Transverse colon (tissue), 4 donors: ENCODE measurements at regions of chr14 and their contacts with region 1.

Region 1: GRCh38 chr14:69797573-69798338 is 715 bp upstream of the SLC10A1 start:
- DNase-seq: peak; percentile 66
- H3K4me3 ChIP-seq: no peak overlapping the region
- H3K27ac ChIP-seq: peak overlapping the region; percentile 44 to 68 (median 53)
- H3K4me1 ChIP-seq: peaks cover 0 to 9% (median 2%) of the 10 kb centered on the region in 4 donors
- H3K27me3 ChIP-seq: peaks cover 7% of the 10 kb centered on the region
- CTCF ChIP-seq: no peak
- EP300 ChIP-seq: no peak
- POLR2A ChIP-seq: no peak

Region 2: GRCh38 chr14:69827560-69827959 is 29.8 kb after region 1 on chr14:
- in situ Hi-C with region 1: no loop called
- intact Hi-C with region 1: loop called (anchors 1 kb)
- DNase-seq: no peak
- H3K4me3 ChIP-seq: no peak overlapping the region
- H3K27ac ChIP-seq: no peak overlapping the region
- H3K4me1 ChIP-seq: no peaks in the 10 kb centered on the region
- H3K27me3 ChIP-seq: no peaks in the 10 kb centered on the region
- CTCF ChIP-seq: no peak
- EP300 ChIP-seq: no peak
- POLR2A ChIP-seq: no peak